B cell (primary cell): ENCODE measurements at regions of chr17 and their contacts with region 1.

Region 1: GRCh38 chr17:51000835-51001638 is 119.6 kb downstream of the SPAG9 start:
- DNase-seq: peak; percentile 80
- ATAC-seq: peak; percentile 67
- H3K4me3 ChIP-seq: no peak overlapping the region
- H3K4me3 Mint-ChIP-seq: no peak overlapping the region
- H3K27ac ChIP-seq: no peak overlapping the region
- H3K27ac Mint-ChIP-seq: no peak overlapping the region
- H3K4me1 ChIP-seq: no peaks in the 10 kb centered on the region
- H3K4me1 Mint-ChIP-seq: no peaks in the 10 kb centered on the region
- H3K27me3 ChIP-seq: no peaks in the 10 kb centered on the region
- H3K27me3 Mint-ChIP-seq: no peaks in the 10 kb centered on the region
- CTCF ChIP-seq: peak; percentile 86

Region 2: DNA sequence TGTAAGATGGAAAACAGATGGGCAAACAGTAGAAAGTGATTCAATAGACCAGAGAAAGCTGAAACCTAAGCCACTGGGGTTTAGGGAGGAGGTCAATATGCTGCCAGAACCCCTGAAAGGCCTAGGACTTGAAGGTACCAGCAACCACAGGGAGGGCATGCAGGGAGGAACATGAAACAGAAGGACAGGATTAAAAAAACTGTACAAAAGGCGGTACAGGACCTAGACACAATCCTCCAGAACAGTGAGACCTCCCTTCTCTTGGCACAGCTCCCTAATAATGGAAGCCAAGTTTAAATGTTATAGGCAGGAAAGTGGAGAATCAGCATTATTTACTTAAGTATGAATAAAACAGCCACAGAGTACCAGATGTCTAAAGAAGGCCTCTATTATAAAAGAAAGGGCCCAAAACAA is 14.1 kb after region 1 on chr17:
- CTCF ChIA-PET with region 1: interaction called, 19 read pairs
- POLR2A ChIA-PET with region 1: no interaction called
- intact Hi-C with region 1: no loop called
- DNase-seq: no peak
- ATAC-seq: no peak
- H3K4me3 ChIP-seq: no peak overlapping the region
- H3K4me3 Mint-ChIP-seq: no peak overlapping the region
- H3K27ac ChIP-seq: no peak overlapping the region
- H3K27ac Mint-ChIP-seq: no peak overlapping the region
- H3K4me1 ChIP-seq: no peaks in the 10 kb centered on the region
- H3K4me1 Mint-ChIP-seq: no peaks in the 10 kb centered on the region
- H3K27me3 ChIP-seq: no peaks in the 10 kb centered on the region
- H3K27me3 Mint-ChIP-seq: no peaks in the 10 kb centered on the region
- CTCF ChIP-seq: no peak

Region 3: DNA sequence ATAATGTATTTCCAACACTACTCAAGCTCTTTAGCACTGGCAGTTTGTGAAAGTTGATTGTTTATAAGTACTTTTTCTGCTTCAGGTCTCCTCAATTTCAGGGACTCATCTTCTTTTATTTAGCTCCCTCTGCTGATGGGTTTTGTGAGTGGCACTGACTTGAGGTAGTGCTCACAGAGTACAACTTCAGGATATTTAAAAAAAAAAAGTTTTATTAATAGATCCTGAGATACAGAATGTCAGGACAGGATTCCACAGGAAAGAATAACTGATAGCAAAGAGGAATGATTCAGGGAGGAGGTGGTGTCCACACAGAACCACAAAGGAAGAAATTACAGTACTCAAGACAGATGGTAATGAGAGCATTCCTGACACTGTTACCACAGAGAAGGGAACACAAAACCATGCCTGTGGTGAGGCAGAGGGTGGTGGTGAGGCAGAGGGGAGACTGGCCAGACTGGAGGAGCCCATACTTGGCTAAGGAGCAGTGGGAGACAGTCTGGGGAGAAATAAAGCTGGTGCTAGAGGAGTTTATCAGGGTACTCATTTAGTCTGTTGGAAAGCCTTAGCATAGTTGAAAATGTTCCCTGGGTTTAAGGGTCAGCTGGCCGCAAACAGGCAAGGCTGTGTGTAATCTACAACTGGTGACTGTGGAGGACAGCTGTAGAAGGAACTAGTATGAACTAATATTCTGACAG is 55.9 kb after region 1 on chr17:
- CTCF ChIA-PET with region 1: interaction called, 258 read pairs
- POLR2A ChIA-PET with region 1: no interaction called
- intact Hi-C with region 1: loop called (anchors 1 kb)
- DNase-seq: peak; percentile 61
- ATAC-seq: peak; percentile 65
- H3K4me3 ChIP-seq: no peak overlapping the region
- H3K4me3 Mint-ChIP-seq: no peak overlapping the region
- H3K27ac ChIP-seq: no peak overlapping the region
- H3K27ac Mint-ChIP-seq: no peak overlapping the region
- H3K4me1 ChIP-seq: peaks cover 12 to 16% of the 10 kb centered on the region in 2 donors
- H3K4me1 Mint-ChIP-seq: peaks cover 15% of the 10 kb centered on the region
- H3K27me3 ChIP-seq: no peaks in the 10 kb centered on the region
- H3K27me3 Mint-ChIP-seq: no peaks in the 10 kb centered on the region
- CTCF ChIP-seq: peak; percentile 77

Region 4: DNA sequence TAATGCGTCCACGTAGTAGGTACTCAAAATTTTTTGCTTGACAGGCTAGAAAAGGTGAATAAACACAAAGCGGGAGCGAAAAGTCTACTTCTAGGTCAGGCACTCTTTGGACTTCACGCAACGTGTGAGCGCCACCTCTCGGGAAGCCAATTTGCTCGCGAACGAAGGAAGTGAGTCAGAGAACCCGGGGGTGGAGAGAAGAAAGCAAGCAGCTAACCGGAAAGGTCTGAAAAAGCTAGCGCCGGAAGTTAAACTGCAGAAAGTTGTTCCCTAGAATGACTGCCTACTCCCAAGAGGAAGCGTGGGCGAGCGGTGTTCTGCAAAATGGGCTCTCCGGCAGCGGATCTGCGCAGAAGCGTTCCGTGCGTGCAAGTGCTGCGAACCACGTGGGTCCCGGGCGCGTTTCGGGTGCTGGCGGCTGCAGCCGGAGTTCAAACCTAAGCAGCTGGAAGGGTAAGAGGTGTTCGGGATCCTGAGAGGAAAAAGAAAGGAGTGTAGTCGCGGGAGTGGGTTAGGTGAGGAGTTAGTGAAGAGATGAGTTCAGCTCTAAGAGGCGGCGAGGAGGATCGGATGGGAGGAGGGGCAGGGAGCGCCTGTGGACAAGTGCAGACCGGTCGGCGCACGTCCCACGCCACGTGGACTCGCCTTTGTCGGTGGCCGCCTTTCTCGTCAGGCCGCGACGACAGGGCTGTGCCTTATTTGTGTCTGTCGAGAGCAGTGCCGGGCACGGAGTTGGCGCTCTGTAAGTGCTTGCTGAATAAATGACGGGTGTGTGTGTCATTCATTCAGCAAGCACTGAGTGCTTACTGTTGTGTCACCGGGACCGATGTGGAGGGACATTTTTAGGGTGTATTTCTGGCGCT is 152.4 kb after region 1 on chr17 and contains the start of gene NME1:
- CTCF ChIA-PET with region 1: interaction called, 97 read pairs
- POLR2A ChIA-PET with region 1: no interaction called
- intact Hi-C with region 1: loop called (anchors 1 kb)
- DNase-seq: peak; percentile 98
- ATAC-seq: peak; percentile 88
- H3K4me3 ChIP-seq: peak within 1 kb of the TSS; percentile 55 to 86 (median 81)
- H3K4me3 Mint-ChIP-seq: no peak within 1 kb of the TSS
- H3K27ac ChIP-seq: peak within 1 kb of the TSS; percentile 68 to 83
- H3K27ac Mint-ChIP-seq: no peak within 1 kb of the TSS
- H3K4me1 ChIP-seq: peaks cover 16 to 23% of the 10 kb centered on the region in 2 donors
- H3K4me1 Mint-ChIP-seq: peaks cover 7% of the 10 kb centered on the region
- H3K27me3 ChIP-seq: no peaks in the 10 kb centered on the region
- H3K27me3 Mint-ChIP-seq: no peaks in the 10 kb centered on the region
- CTCF ChIP-seq: peak; percentile 86
- total RNA-seq, gene NME1: 19.0 and 20.5 TPM in 2 replicates

Region 5: DNA sequence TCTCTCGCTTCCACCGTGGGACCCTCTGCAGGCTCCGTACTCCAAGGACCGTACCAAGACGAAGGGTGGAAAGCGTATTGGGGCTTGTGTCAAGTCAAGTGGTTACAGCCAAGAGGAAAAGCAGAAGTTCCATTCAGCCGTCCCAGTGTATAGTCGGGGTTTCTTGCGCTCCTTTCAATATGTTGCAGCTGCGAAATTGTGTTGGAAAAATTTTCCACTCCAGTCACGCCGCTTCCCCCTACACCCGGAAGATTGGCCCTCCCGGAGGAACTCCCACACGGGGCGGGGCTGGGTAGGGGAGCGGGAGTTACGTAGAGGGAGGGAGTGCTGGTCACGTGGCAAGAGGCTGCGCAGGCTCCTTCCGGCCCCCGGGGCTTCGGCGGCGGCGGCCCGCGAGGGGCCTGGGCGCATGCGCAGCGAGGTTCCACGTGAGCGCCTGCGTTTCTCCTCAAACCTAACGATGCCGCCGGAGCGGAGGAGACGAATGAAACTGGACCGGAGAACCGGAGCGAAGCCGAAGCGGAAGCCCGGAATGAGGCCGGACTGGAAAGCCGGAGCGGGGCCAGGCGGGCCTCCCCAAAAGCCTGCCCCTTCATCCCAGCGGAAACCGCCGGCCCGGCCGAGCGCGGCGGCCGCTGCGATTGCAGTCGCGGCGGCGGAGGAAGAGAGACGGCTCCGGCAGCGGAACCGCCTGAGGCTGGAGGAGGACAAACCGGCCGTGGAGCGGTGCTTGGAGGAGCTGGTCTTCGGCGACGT is 259.3 kb after region 1 on chr17 and contains the start of gene UTP18:
- CTCF ChIA-PET with region 1: no interaction called
- POLR2A ChIA-PET with region 1: no interaction called
- intact Hi-C with region 1: loop called (anchors 2 kb)
- DNase-seq: peak; percentile 99
- ATAC-seq: peak; percentile 85
- H3K4me3 ChIP-seq: peak within 1 kb of the TSS; percentile 86 to 97 (median 92)
- H3K4me3 Mint-ChIP-seq: peak within 1 kb of the TSS; percentile 98
- H3K27ac ChIP-seq: peak within 1 kb of the TSS; percentile 96 to 98
- H3K27ac Mint-ChIP-seq: peak within 1 kb of the TSS; percentile 99
- H3K4me1 ChIP-seq: peaks cover 26 to 36% of the 10 kb centered on the region in 2 donors
- H3K4me1 Mint-ChIP-seq: peaks cover 54% of the 10 kb centered on the region
- H3K27me3 ChIP-seq: no peaks in the 10 kb centered on the region
- H3K27me3 Mint-ChIP-seq: no peaks in the 10 kb centered on the region
- CTCF ChIP-seq: no peak
- total RNA-seq, gene UTP18: 34.2 and 37.7 TPM in 2 replicates

Region 6: GRCh38 chr17:51402899-51403298 is 401.9 kb after region 1 on chr17:
- CTCF ChIA-PET with region 1: no interaction called
- POLR2A ChIA-PET with region 1: no interaction called
- intact Hi-C with region 1: no loop called
- DNase-seq: no peak
- ATAC-seq: no peak
- H3K4me3 ChIP-seq: no peak overlapping the region
- H3K4me3 Mint-ChIP-seq: no peak overlapping the region
- H3K27ac ChIP-seq: no peak overlapping the region
- H3K27ac Mint-ChIP-seq: no peak overlapping the region
- H3K4me1 ChIP-seq: no peaks in the 10 kb centered on the region
- H3K4me1 Mint-ChIP-seq: no peaks in the 10 kb centered on the region
- H3K27me3 ChIP-seq: peaks cover 0 to 4% (median 1%) of the 10 kb centered on the region in 4 experiments
- H3K27me3 Mint-ChIP-seq: peaks cover 29% of the 10 kb centered on the region
- CTCF ChIP-seq: no peak